ENCODE measurements at regions of chr22 and their contacts with region 1.

Region 1: GRCh38 chr22:36180038-36180880 is 19.7 kb upstream of the APOL3 start:
- DNase-seq: peak; percentile 94
- H3K4me3 Mint-ChIP-seq: no peak overlapping the region
- H3K27ac Mint-ChIP-seq: no peak overlapping the region
- H3K4me1 Mint-ChIP-seq: peaks cover 3% of the 10 kb centered on the region
- H3K27me3 Mint-ChIP-seq: peaks cover 12% of the 10 kb centered on the region

Region 2: GRCh38 chr22:36144886-36145541 is 35.2 kb before region 1 on chr22:
- intact Hi-C with region 1: loop called (anchors 1 kb)
- DNase-seq: peak; percentile 76
- H3K4me3 Mint-ChIP-seq: no peak overlapping the region
- H3K27ac Mint-ChIP-seq: peak overlapping the region; percentile 9
- H3K4me1 Mint-ChIP-seq: peaks cover 5% of the 10 kb centered on the region
- H3K27me3 Mint-ChIP-seq: no peaks in the 10 kb centered on the region

Region 3: DNA sequence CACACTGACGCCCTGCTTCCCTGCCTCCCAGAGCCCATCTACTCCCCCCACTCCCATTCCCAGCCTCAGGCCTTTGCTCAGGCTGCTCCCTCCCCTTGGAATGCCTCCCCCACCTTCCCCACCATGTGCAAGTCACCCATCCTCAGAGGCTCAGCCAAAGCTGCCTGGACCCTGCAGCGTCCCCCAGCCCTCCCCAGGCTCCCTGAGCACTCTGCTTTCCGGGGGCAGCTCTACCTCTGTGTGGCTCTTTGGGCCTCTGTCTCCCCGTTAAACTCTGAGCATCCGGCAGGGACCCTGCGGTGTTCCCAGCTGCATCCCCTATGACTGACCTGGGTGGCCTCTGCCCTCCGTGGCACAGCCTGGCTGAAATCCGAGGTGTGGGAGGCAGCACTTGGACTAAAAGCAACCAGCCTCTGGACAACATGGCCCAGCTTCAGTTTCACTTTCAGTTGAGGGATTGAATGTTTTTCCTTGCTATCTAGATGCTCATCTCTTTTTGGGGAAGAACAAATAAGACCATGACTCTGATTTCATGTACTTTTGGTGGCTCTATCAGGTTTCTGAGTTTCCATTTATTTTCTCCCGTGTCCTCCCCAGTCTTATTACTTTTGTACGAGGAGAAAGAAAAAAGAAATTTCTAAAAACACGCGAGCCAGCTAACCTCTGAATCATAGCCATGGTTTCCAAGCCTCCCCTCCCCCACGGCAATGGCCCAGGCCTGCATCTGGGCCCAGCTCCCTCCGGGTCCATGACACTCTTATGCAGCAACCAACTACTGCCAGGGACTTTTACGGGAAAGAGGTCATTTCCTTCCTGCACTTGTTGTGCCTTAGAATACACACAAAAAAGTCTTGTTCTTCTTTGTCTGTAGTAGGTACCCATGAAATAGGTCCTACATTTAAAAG is 23.5 kb before region 1 on chr22:
- intact Hi-C with region 1: loop called (anchors 2 kb)
- DNase-seq: peak; percentile 86
- H3K4me3 Mint-ChIP-seq: peak overlapping the region; percentile 94
- H3K27ac Mint-ChIP-seq: peak overlapping the region; percentile 99
- H3K4me1 Mint-ChIP-seq: peaks cover 81% of the 10 kb centered on the region
- H3K27me3 Mint-ChIP-seq: no peaks in the 10 kb centered on the region

Region 4: GRCh38 chr22:36221799-36222751 is 41.8 kb after region 1 on chr22:
- intact Hi-C with region 1: no loop called
- DNase-seq: peak; percentile 84
- H3K4me3 Mint-ChIP-seq: no peak overlapping the region
- H3K27ac Mint-ChIP-seq: no peak overlapping the region
- H3K4me1 Mint-ChIP-seq: peaks cover 7% of the 10 kb centered on the region
- H3K27me3 Mint-ChIP-seq: peaks cover 25% of the 10 kb centered on the region

Region 5: DNA sequence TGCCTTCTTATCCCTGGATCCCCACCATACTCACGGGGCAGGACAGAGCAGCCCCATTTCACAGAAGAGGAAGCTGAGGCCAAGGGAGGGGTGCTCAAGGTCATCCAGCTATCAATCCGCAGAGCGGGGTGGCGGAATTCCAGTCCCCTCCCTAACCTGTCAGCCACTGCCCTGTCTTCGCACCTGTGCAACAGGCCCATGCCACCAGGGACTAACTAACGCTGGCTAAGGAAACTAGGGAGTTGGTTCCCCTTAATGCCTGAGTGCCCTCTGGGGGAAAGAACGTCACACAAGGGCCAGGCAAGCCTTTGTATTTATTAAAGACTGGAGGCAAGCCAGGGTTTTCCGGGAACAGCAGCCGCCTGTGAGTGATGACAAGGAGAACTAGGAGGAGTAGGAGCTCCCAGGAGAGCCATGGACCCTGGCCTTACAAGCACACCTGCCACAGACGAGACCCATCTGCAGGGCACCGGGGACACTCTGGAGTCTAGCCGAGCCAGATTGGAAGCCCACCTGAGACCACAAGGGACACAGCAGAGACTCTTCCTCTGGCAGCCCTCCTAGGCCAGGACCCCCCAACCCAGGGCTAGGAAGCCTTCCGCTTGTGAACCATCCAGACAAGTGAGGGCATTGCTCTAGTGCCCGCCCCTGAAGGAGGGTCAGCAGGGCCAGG is 143.1 kb after region 1 on chr22:
- intact Hi-C with region 1: no loop called
- DNase-seq: no peak
- H3K4me3 Mint-ChIP-seq: no peak overlapping the region
- H3K27ac Mint-ChIP-seq: peak overlapping the region; percentile 7
- H3K4me1 Mint-ChIP-seq: peaks cover 22% of the 10 kb centered on the region
- H3K27me3 Mint-ChIP-seq: no peaks in the 10 kb centered on the region